ENCODE measurements at regions of chr5 and their contacts with region 1.

Region 1: GRCh38 chr5:82364497-82364896 is 86.3 kb upstream of the RPS23 start:
- DNase-seq: no peak
- ATAC-seq: peak; percentile 49; the same call in 2 of the 3 replicates
- H3K4me3 ChIP-seq: no peak overlapping the region
- H3K27ac ChIP-seq: peak overlapping the region; percentile 18
- H3K4me1 ChIP-seq: peaks cover 60% of the 10 kb centered on the region
- H3K27me3 ChIP-seq: no peaks in the 10 kb centered on the region
- CTCF ChIP-seq: peak; percentile 64
- EP300 ChIP-seq: no peak
- POLR2A ChIP-seq: no peak
- RAD21 ChIP-seq: no peak

Region 2: DNA sequence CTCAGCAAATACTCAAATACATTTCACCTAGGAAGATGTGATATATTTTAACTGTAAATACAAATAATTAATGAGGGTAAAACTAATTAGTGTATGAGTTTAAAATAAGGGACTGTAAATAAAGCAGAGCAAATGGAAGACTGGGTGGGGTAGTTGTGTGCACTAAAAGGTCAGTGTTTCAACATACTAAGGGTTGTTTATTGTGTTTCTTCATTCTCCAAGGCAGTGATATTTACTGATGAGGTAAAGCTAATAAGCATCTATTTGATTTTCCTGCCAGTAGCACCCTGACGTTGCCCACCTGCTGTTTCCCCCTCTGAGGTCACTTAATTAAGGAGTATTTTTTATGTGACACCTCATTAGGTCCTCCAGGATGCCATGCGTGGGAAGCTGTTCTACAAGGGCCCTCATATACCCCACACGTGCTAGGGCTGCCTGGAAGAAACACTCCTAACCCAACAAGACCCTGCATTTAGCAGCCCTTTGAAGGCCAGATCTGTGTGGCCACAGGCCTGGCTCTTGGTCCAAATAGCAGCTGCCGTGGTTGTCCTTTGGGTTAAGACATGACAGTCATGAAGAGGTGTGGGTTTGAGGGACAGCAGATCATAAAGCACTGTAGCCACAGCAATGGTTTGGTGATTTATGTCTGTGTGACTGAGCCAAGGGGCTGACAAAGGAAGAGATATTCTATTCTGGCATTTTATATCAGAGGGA is 11.2 kb after region 1 on chr5:
- CTCF ChIA-PET with region 1: no interaction called
- POLR2A ChIA-PET with region 1: interaction called, 14 read pairs
- in situ Hi-C with region 1: no loop called
- intact Hi-C with region 1: no loop called
- DNase-seq: peak; percentile 47
- ATAC-seq: peak; percentile 69
- H3K4me3 ChIP-seq: no peak overlapping the region
- H3K27ac ChIP-seq: no peak overlapping the region
- H3K4me1 ChIP-seq: peaks cover 17% of the 10 kb centered on the region
- H3K27me3 ChIP-seq: no peaks in the 10 kb centered on the region
- CTCF ChIP-seq: no peak
- EP300 ChIP-seq: peak in 1 of 2 experiments; percentile 58; a peak in 2 of 4 replicates
- POLR2A ChIP-seq: no peak
- RAD21 ChIP-seq: no peak

Region 3: DNA sequence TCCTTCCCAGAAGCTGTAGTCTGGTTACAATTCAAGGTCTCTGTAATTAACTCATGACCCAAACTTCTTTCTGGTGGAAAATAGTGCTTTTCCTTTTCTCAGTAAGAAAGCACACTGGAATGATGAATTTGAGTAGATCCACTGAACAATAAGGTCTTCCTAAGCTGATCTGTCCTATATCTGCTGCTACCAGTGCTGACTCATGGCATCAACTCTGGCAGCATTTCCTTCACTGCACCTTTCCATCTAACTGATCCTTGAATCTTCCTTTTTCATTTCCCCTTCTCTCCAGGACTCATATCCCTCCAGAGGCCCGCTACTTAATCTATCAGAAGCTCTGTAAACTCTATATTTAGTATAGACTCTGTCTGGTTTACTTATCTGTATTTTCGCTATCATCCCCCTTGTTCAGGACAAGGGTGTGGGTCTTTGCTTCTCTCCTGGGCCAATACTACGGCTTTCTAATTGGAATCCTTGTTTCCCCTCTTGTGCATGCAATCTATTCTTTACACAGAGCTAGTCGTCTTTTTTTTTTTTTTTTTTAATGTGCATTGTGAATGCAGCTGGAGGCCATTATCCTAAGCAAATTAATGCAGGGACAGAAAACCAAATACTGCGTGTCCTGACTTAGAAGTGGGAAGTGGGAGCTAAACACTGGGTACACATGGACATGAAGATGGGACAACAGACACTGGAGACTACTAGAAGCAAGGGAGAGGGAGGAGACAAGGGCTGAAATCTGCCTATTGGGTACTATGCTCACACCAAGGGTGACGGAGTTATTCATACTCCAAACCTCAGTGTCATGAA is 105.9 kb after region 1 on chr5:
- CTCF ChIA-PET with region 1: no interaction called
- POLR2A ChIA-PET with region 1: interaction called, 3 read pairs
- in situ Hi-C with region 1: no loop called
- intact Hi-C with region 1: loop called (anchors 10 kb)
- DNase-seq: no peak
- ATAC-seq: no peak
- H3K4me3 ChIP-seq: no peak overlapping the region
- H3K27ac ChIP-seq: no peak overlapping the region
- H3K4me1 ChIP-seq: peaks cover 8% of the 10 kb centered on the region; the same call in 1 of the 2 replicates
- H3K27me3 ChIP-seq: no peaks in the 10 kb centered on the region
- CTCF ChIP-seq: no peak
- EP300 ChIP-seq: no peak
- POLR2A ChIP-seq: no peak
- RAD21 ChIP-seq: no peak

Region 4: GRCh38 chr5:82812575-82812974 is 448.1 kb after region 1 on chr5:
- CTCF ChIA-PET with region 1: no interaction called
- POLR2A ChIA-PET with region 1: no interaction called
- in situ Hi-C with region 1: no loop called
- intact Hi-C with region 1: no loop called
- DNase-seq: no peak
- ATAC-seq: no peak
- H3K4me3 ChIP-seq: no peak overlapping the region
- H3K27ac ChIP-seq: no peak overlapping the region
- H3K4me1 ChIP-seq: no peaks in the 10 kb centered on the region
- H3K27me3 ChIP-seq: 0 out of 5 replicates have a peak, but pooled peaks cover 0 to 3% of the 10 kb centered on the region in 2 experiments
- CTCF ChIP-seq: no peak
- EP300 ChIP-seq: no peak
- POLR2A ChIP-seq: no peak
- RAD21 ChIP-seq: no peak